Right ventricle myocardium inferior (tissue), 1 donor: ENCODE measurements at regions of chr5 and their contacts with region 1.

Region 1: GRCh38 chr5:151880324-151880723 is 44.3 kb downstream of the GLRA1 start:
- DNase-seq: peak; percentile 71
- ATAC-seq: peak; percentile 93

Region 2: GRCh38 chr5:151805414-151806223 is 74.7 kb before region 1 on chr5:
- intact Hi-C with region 1: no loop called
- DNase-seq: no peak
- ATAC-seq: peak; percentile 92

Region 3: GRCh38 chr5:152349683-152350526 is 469.6 kb after region 1 on chr5:
- intact Hi-C with region 1: loop called (anchors 10 kb)
- DNase-seq: no peak
- ATAC-seq: peak; percentile 75